Caco-2 (cell line): ENCODE measurements at regions of chr21 and their contacts with region 1.

Region 1: DNA sequence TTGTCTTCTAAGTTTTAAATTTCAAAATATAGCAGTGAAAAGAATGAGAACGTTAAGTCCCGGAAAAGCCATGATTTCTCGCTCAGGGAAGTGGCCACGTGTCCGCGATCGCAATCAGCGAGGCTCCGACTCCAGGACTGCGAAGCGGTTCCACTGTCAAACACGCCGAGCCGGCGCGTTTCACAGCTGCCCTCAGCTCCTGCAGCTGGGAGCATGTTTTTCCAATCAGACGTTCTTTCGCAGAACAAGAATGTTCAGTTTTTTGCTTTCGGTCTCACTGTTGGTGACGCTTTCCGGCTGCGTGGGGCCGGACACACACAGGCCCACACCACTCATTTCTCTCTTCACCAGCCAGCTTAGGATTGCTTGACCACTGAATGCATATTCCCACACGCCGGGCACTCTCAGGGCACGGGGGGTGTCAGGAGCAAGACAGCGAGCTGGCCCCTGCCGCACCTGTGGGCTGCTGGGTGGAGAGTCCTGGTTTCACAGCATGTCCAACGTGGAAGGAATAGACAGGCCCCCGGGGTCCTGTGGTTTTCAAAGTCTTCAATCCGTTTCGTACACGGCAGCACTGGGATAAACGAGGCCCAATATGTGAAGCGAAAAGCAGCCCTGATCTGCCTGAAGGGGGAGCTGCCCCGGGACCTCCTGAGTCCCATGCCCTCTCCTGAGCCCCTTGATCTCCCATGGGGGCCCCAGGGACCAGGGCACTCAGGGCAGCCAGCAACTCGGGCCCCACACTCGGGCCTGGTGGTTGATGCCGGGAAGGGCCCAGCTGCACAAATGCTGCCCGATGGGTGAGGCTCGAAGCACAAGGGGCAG is 47.3 kb upstream of the COL18A1 start:
- DNase-seq: peak; percentile 58 to 65
- H3K4me3 ChIP-seq: no peak overlapping the region
- H3K4me3 Mint-ChIP-seq: peak overlapping the region; percentile 62
- H3K27ac Mint-ChIP-seq: peak overlapping the region; percentile 99
- H3K4me1 ChIP-seq: peaks cover 79% of the 10 kb centered on the region
- H3K4me1 Mint-ChIP-seq: peaks cover 75% of the 10 kb centered on the region
- H3K27me3 ChIP-seq: no peaks in the 10 kb centered on the region
- H3K27me3 Mint-ChIP-seq: no peaks in the 10 kb centered on the region
- CTCF ChIP-seq: peak in 1 of 2 experiments; percentile 14

Region 2: DNA sequence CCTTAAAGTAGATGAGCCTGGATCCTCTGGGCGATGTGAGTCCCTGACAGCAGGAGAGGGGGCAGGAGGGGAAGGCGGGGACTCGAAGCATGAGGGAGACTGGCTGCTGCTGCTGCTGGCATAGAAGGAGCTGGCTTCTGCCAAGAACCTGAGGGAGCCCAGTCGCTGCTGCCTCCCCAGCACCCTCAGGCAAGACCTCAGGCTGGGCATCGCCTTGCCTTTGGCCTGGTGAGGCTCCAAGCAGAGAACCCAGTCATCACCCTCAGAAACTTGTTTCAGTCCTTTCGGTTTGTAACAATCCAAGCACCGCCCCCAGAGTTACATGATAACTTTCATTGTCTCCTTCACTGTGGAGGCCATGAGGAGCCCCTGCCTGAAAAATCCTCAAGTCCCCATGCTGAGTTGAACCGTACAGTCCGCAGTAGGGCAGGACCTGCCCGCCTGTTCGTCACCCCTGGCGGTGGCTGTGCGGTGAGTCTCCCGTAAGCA is 108.7 kb before region 1 on chr21:
- CTCF ChIA-PET with region 1: no interaction called
- POLR2A ChIA-PET with region 1: no interaction called
- intact Hi-C with region 1: no loop called
- DNase-seq: no peak
- H3K4me3 ChIP-seq: peak overlapping the region; percentile 32
- H3K4me3 Mint-ChIP-seq: peak overlapping the region; percentile 62
- H3K27ac Mint-ChIP-seq: no peak overlapping the region
- H3K4me1 ChIP-seq: no peaks in the 10 kb centered on the region
- H3K4me1 Mint-ChIP-seq: no peaks in the 10 kb centered on the region
- H3K27me3 ChIP-seq: no peaks in the 10 kb centered on the region
- H3K27me3 Mint-ChIP-seq: no peaks in the 10 kb centered on the region
- CTCF ChIP-seq: no peak

Region 3: DNA sequence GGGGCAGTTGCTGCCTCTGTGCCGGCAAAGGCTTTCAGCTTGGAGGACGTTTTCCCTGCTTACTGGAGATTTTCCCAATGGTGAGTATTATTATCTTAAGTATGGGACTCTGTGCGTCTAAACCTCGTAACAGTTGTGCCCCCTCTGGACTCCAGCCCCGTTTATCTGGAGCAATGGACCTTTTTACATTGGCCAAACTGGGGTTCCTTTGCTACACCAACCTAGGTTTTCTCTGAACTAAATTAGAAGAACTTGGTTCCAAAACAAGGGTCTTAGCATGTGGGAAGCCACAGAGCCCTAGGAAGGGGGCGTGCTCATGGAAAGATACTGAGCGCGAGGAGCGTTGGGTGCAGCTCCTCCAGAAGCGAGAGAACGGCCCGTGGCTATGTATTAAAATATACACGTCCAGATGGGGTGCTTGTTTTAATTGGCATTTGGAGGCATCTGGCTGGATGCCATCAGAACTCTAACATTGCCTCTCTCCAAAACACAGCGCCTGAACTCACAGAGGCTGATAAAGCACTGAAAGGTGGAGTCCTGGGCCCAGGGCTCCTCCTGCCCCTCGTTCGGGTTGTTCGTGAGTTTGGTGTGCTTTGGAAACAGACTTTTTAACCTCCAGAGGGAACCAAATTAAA is 98.3 kb before region 1 on chr21:
- CTCF ChIA-PET with region 1: no interaction called
- POLR2A ChIA-PET with region 1: no interaction called
- intact Hi-C with region 1: no loop called
- DNase-seq: no peak
- H3K4me3 ChIP-seq: no peak overlapping the region
- H3K4me3 Mint-ChIP-seq: peak overlapping the region; percentile 63
- H3K27ac Mint-ChIP-seq: no peak overlapping the region
- H3K4me1 ChIP-seq: peaks cover 29% of the 10 kb centered on the region
- H3K4me1 Mint-ChIP-seq: no peaks in the 10 kb centered on the region
- H3K27me3 ChIP-seq: no peaks in the 10 kb centered on the region
- H3K27me3 Mint-ChIP-seq: no peaks in the 10 kb centered on the region
- CTCF ChIP-seq: no peak

Region 4: DNA sequence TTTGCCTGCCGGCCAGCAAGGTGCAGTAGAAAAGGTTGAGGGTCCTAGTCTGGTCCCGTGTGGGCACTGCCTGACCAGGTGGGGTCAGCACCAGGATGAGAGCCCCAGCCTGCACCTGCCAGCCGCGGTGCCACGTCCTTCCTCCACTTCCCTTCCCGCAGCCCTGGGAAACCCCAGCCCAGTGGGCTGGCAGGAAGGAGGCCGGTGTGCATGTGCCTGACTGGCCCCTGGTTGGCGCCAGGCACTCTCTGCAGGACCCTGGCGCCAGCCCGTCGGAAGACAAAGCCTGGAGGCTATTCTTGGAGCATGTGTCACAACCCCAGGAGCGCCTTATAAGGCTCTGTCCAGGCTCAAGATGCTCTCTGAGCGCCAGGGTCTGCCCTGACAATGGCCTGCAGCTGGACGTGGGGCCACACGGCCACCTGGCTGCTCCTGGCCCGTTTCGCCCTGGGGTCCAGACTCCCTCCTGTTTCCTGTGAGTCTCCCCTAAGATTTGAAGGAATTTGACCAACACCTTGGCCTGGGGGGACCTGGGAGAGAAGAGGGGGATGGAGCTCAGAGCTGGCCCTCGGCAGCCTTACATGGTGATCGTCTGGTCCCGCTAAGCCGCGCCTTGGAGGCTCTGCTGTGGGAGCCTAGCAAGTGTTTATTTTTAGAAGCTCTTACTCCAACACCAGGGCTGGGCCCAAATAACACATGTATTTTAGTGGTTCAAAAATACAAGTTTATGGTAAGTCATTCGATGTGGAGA is 38.0 kb before region 1 on chr21:
- CTCF ChIA-PET with region 1: interaction called, 5 read pairs
- POLR2A ChIA-PET with region 1: no interaction called
- intact Hi-C with region 1: loop called (anchors 5 kb)
- DNase-seq: peak in 1 of 2 experiments; percentile 43
- H3K4me3 ChIP-seq: no peak overlapping the region
- H3K4me3 Mint-ChIP-seq: no peak overlapping the region
- H3K27ac Mint-ChIP-seq: peak overlapping the region; percentile 89
- H3K4me1 ChIP-seq: peaks cover 53% of the 10 kb centered on the region
- H3K4me1 Mint-ChIP-seq: peaks cover 19% of the 10 kb centered on the region
- H3K27me3 ChIP-seq: no peaks in the 10 kb centered on the region
- H3K27me3 Mint-ChIP-seq: no peaks in the 10 kb centered on the region
- CTCF ChIP-seq: no peak

Region 5: GRCh38 chr21:45378258-45378966 is 20.8 kb after region 1 on chr21:
- CTCF ChIA-PET with region 1: no interaction called
- POLR2A ChIA-PET with region 1: interaction called, 3 read pairs
- intact Hi-C with region 1: loop called (anchors 1 kb)
- DNase-seq: peak in 1 of 2 experiments; percentile 26
- H3K4me3 ChIP-seq: no peak overlapping the region
- H3K4me3 Mint-ChIP-seq: no peak overlapping the region
- H3K27ac Mint-ChIP-seq: peak overlapping the region; percentile 61
- H3K4me1 ChIP-seq: peaks cover 10% of the 10 kb centered on the region
- H3K4me1 Mint-ChIP-seq: peaks cover 16% of the 10 kb centered on the region
- H3K27me3 ChIP-seq: no peaks in the 10 kb centered on the region
- H3K27me3 Mint-ChIP-seq: no peaks in the 10 kb centered on the region
- CTCF ChIP-seq: no peak

Region 6: GRCh38 chr21:45404730-45405270 is 47.2 kb after region 1 on chr21 and contains the start of gene COL18A1:
- CTCF ChIA-PET with region 1: interaction called, 11 read pairs
- POLR2A ChIA-PET with region 1: interaction called, 6 read pairs
- intact Hi-C with region 1: loop called (anchors 2 kb)
- DNase-seq: peak; percentile 75 to 81
- H3K4me3 ChIP-seq: peak within 1 kb of the TSS; percentile 78
- H3K4me3 Mint-ChIP-seq: peak within 1 kb of the TSS; percentile 76
- H3K27ac Mint-ChIP-seq: peak within 1 kb of the TSS; percentile 57
- H3K4me1 ChIP-seq: peaks cover 44% of the 10 kb centered on the region
- H3K4me1 Mint-ChIP-seq: peaks cover 21% of the 10 kb centered on the region
- H3K27me3 ChIP-seq: no peaks in the 10 kb centered on the region
- H3K27me3 Mint-ChIP-seq: no peaks in the 10 kb centered on the region
- CTCF ChIP-seq: no peak
- total RNA-seq, gene COL18A1: 160 and 170 TPM in 2 replicates